CD8-positive, alpha-beta T cell (primary cell): ENCODE measurements at regions of chr9 and their contacts with region 1.

Region 1: GRCh38 chr9:79617395-79617794 is 45.6 kb downstream of the TLE4 start:
- DNase-seq: no peak
- ATAC-seq: no peak
- H3K4me3 ChIP-seq: no peak overlapping the region
- H3K4me3 Mint-ChIP-seq: no peak overlapping the region
- H3K27ac ChIP-seq: no peak overlapping the region
- H3K27ac Mint-ChIP-seq: no peak overlapping the region
- H3K4me1 ChIP-seq: peaks cover 3% of the 10 kb centered on the region
- H3K4me1 Mint-ChIP-seq: peaks cover 74% of the 10 kb centered on the region
- H3K27me3 ChIP-seq: no peaks in the 10 kb centered on the region
- H3K27me3 Mint-ChIP-seq: no peaks in the 10 kb centered on the region
- CTCF ChIP-seq: no peak

Region 2: GRCh38 chr9:79583952-79584654 is 33.3 kb before region 1 on chr9:
- CTCF ChIA-PET with region 1: no interaction called
- POLR2A ChIA-PET with region 1: interaction called, 3 read pairs
- intact Hi-C with region 1: loop called (anchors 5 kb)
- DNase-seq: peak in 4 of 9 experiments; percentile 20 to 57 (median 30)
- ATAC-seq: peak; percentile 36
- H3K4me3 ChIP-seq: no peak overlapping the region
- H3K4me3 Mint-ChIP-seq: peak overlapping the region; percentile 54
- H3K27ac ChIP-seq: no peak overlapping the region
- H3K27ac Mint-ChIP-seq: peak overlapping the region; percentile 46
- H3K4me1 ChIP-seq: peaks cover 55% of the 10 kb centered on the region
- H3K4me1 Mint-ChIP-seq: peaks cover 82% of the 10 kb centered on the region
- H3K27me3 ChIP-seq: no peaks in the 10 kb centered on the region
- H3K27me3 Mint-ChIP-seq: no peaks in the 10 kb centered on the region
- CTCF ChIP-seq: no peak

Region 3: GRCh38 chr9:79630521-79631403 is 13.4 kb after region 1 on chr9:
- CTCF ChIA-PET with region 1: no interaction called
- POLR2A ChIA-PET with region 1: interaction called, 3 read pairs
- intact Hi-C with region 1: loop called in 1 of 2 experiments (anchors 1 kb)
- DNase-seq: peak in 2 of 9 experiments; percentile 24 to 54
- ATAC-seq: peak; percentile 20
- H3K4me3 ChIP-seq: no peak overlapping the region
- H3K4me3 Mint-ChIP-seq: peak overlapping the region; percentile 9
- H3K27ac ChIP-seq: no peak overlapping the region
- H3K27ac Mint-ChIP-seq: peak overlapping the region; percentile 39
- H3K4me1 ChIP-seq: peaks cover 38% of the 10 kb centered on the region
- H3K4me1 Mint-ChIP-seq: peaks cover 72% of the 10 kb centered on the region
- H3K27me3 ChIP-seq: no peaks in the 10 kb centered on the region
- H3K27me3 Mint-ChIP-seq: no peaks in the 10 kb centered on the region
- CTCF ChIP-seq: no peak